ENCODE measurements at regions of chr12 and their contacts with region 1.

Region 1: DNA sequence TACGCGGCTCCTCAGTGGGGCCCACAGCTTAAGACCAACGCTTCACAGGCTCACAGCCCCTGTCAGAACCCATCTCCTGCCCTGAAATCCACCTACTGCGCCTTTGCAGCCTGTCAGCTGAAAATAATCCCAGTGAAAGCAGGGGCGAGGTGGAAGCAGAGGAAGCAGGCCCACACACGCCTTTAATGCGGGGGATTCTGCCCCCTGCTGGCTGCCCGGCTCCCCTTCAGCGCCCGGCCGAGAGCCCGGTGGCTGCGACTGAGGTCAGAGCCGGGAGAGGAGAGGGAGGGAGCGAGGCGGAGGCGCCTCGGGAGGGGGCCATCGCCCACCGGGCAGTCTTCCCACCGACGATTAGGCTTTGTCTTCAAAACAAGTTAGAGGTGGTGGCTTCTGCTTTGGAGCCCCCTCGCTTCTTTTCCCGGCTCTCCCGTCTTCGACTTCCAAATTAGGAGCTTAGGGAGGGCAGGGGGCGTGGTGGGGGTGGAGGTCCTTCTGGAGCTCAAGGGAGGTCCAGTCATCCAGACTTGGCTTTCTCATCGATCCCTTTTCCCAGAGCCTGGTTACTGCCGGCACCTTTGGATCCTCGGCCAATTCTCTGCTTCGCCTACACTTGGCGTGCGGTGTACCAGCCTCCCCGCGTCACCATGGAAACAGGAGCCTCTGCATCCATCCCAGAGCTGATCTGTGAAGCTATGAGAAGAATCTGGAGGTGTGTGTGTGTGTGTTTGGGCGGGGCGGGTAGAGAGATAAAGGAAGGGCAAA is 25.2 kb upstream of the RND1 start:
- DNase-seq: peak; percentile 62 to 72 (median 64)
- H3K4me3 ChIP-seq: no peak overlapping the region
- H3K4me3 Mint-ChIP-seq: peak overlapping the region in 2 of 8 donors; percentile 38 to 56
- H3K27ac ChIP-seq: no peak overlapping the region
- H3K27ac Mint-ChIP-seq: peak overlapping the region in 1 of 7 donors; percentile 6
- H3K4me1 ChIP-seq: peaks cover 9% of the 10 kb centered on the region
- H3K4me1 Mint-ChIP-seq: peaks cover 0 to 2% (median 0%) of the 10 kb centered on the region in 4 donors
- H3K27me3 ChIP-seq: peaks cover 11% of the 10 kb centered on the region
- H3K27me3 Mint-ChIP-seq: peaks cover 5 to 11% of the 10 kb centered on the region in 2 donors

Region 2: DNA sequence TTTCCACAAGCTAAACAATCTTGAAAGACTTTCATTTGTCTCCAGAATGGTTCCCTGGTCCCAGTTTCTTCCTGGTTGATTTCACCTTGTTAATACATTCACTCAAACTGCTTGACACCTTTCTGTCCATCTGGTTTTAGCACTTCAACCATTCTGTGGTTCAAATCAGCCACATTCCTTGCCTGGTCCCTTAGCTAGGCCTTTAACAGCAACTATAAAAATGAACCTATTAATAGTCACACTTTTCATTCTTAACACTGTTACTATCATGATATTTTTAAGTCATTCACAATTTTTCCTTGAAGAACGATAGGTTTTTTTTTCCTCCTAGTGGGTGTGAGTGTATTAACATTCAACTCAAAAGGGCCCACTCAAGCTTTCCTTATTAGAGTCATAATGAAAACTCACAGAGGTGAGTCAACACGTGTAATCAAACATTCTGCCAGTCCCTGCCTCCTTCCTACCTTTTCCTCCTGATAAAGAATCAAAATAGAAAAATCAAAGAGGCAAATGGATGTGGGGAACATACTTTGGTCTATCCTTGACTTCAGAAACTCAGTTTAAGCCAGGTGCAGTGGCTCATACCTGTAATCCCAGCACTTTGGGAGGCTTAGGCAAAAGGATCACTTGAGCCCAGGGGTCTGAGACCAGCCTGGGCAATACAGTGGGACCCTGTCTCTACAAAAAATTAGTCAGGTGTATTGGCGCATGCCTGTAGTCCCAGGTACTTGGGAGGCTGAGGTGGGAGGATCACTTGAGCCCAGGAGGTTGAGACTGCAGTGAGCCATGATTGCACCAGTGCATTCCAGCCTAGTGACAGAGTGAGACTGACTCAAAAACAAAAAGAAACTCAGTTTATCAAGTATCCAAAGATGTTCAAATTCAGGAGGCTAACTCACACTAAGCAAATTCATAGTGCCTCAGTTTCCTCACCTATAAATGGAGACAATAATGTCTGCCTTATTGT is 139.8 kb before region 1 on chr12:
- CTCF ChIA-PET with region 1: interaction called, 3 read pairs
- POLR2A ChIA-PET with region 1: no interaction called
- intact Hi-C with region 1: loop called (anchors 5 kb)
- DNase-seq: no peak
- H3K4me3 ChIP-seq: no peak overlapping the region
- H3K4me3 Mint-ChIP-seq: no peak overlapping the region
- H3K27ac ChIP-seq: no peak overlapping the region
- H3K27ac Mint-ChIP-seq: peak overlapping the region in 2 of 7 donors; percentile 43 to 64
- H3K4me1 ChIP-seq: no peaks in the 10 kb centered on the region
- H3K4me1 Mint-ChIP-seq: peaks cover 0 to 1% (median 0%) of the 10 kb centered on the region in 4 donors
- H3K27me3 ChIP-seq: no peaks in the 10 kb centered on the region
- H3K27me3 Mint-ChIP-seq: peaks cover 0 to 1% of the 10 kb centered on the region in 2 donors

Region 3: GRCh38 chr12:48814262-48815125 is 76.3 kb before region 1 on chr12:
- CTCF ChIA-PET with region 1: interaction called, 7 read pairs
- POLR2A ChIA-PET with region 1: no interaction called
- intact Hi-C with region 1: loop called (anchors 1 kb)
- DNase-seq: peak; percentile 63 to 76 (median 66)
- H3K4me3 ChIP-seq: peak overlapping the region; percentile 87 to 94
- H3K4me3 Mint-ChIP-seq: peak overlapping the region; percentile 86 to 94 (median 92)
- H3K27ac ChIP-seq: peak overlapping the region; percentile 55
- H3K27ac Mint-ChIP-seq: peak overlapping the region in 6 of 7 donors; percentile 48 to 91 (median 78)
- H3K4me1 ChIP-seq: peaks cover 37% of the 10 kb centered on the region
- H3K4me1 Mint-ChIP-seq: peaks cover 20 to 58% (median 31%) of the 10 kb centered on the region in 4 donors
- H3K27me3 ChIP-seq: no peaks in the 10 kb centered on the region
- H3K27me3 Mint-ChIP-seq: no peaks in the 10 kb centered on the region

Region 4: DNA sequence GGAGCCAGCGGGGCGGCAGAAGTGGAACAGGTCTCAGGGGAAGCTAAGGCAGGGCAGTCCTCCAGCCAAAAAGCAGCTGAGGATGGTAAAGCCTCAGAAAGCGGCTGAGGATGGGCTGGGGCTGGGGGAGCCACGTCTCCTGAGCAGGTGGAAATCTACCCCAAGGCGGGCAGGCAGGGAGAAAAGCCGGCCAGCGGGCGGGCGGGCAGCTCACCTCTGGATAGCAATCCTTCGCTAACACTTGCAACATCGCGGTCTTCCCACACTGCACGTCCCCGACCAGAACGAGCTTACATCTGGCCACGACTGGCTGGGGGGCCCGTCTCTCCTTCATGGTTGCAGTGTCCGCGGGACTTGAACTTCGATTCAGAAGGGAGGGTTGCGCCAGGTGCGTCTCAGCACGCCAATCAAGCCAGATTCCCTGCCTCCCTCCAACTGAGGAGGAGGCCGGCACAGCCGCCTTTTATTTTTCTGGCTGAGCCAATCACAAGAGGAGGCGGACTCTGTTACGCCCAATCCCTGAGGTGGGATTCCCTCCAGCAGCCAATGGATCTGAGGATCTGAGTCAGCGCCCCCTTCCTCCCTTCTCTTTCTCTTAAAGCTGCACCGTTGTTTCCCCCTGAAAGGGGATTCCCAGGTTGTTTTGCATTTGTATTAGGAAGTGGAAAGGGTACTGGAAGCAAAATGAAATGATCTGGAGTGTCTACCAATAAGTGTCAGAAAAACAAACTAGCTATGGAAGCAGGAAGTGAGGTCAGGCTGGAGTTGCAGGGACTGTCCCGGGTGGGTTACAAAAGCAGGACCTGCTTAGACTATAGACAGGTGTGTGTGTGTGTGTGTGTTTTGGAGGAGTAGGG is 25.2 kb before region 1 on chr12 and contains the start of gene RND1:
- CTCF ChIA-PET with region 1: interaction called, 247 read pairs
- POLR2A ChIA-PET with region 1: interaction called, 10 read pairs
- intact Hi-C with region 1: no loop called
- DNase-seq: peak; percentile 85 to 95 (median 87)
- H3K4me3 ChIP-seq: peak within 1 kb of the TSS; percentile 49 to 62
- H3K4me3 Mint-ChIP-seq: peak within 1 kb of the TSS; percentile 90 to 95 (median 92)
- H3K27ac ChIP-seq: peak within 1 kb of the TSS; percentile 62
- H3K27ac Mint-ChIP-seq: peak within 1 kb of the TSS; percentile 80 to 95 (median 88)
- H3K4me1 ChIP-seq: peaks cover 21% of the 10 kb centered on the region
- H3K4me1 Mint-ChIP-seq: peaks cover 17 to 30% (median 23%) of the 10 kb centered on the region in 4 donors
- H3K27me3 ChIP-seq: peaks cover 11% of the 10 kb centered on the region
- H3K27me3 Mint-ChIP-seq: peaks cover 11 to 16% of the 10 kb centered on the region in 2 donors
- total RNA-seq, gene RND1: 0.89 to 1.4 TPM

Region 5: GRCh38 chr12:48903982-48904411 is 13.2 kb after region 1 on chr12:
- CTCF ChIA-PET with region 1: interaction called, 23 read pairs
- POLR2A ChIA-PET with region 1: interaction called, 3 read pairs
- intact Hi-C with region 1: no loop called
- DNase-seq: peak; percentile 81 to 89 (median 82)
- H3K4me3 ChIP-seq: peak overlapping the region in 1 of 2 donors; percentile 36
- H3K4me3 Mint-ChIP-seq: peak overlapping the region; percentile 68 to 86 (median 82)
- H3K27ac ChIP-seq: no peak overlapping the region
- H3K27ac Mint-ChIP-seq: peak overlapping the region in 6 of 7 donors; percentile 76 to 92 (median 89)
- H3K4me1 ChIP-seq: peaks cover 6% of the 10 kb centered on the region
- H3K4me1 Mint-ChIP-seq: peaks cover 2 to 13% (median 7%) of the 10 kb centered on the region in 4 donors
- H3K27me3 ChIP-seq: no peaks in the 10 kb centered on the region
- H3K27me3 Mint-ChIP-seq: peaks cover 0 to 4% of the 10 kb centered on the region in 2 donors

Region 6: DNA sequence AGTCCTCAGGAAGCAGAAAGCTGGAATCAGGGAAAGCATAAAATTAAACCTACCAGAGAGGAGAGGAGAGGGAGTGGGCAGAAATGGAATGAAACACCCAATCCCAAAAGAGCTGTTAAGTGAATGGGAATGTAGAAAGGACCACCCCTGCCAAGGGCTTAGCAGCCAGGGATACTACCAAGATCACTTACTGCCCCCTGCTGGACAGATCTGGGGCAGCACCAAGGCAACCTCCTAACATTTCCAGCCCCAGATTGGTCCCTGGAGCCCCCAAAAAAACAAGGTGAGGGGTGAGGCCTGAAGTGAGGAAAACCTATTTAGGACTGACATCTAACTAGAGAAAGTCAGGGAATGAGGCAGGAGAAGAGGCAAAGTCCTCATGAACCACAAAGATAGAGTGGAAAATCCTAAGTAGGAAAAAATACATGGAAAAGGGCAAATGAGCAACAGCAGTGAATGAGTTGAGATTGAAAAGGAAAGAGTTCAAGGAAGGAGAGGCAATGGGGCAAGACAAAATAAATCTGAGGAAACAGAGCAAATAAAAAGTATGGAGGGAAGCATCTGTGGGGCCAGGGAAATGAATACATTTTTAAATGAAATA is 45.6 kb after region 1 on chr12:
- CTCF ChIA-PET with region 1: interaction called, 21 read pairs
- POLR2A ChIA-PET with region 1: no interaction called
- intact Hi-C with region 1: no loop called
- DNase-seq: peak; percentile 74 to 82 (median 78)
- H3K4me3 ChIP-seq: no peak overlapping the region
- H3K4me3 Mint-ChIP-seq: no peak overlapping the region
- H3K27ac ChIP-seq: peak overlapping the region; percentile 71
- H3K27ac Mint-ChIP-seq: peak overlapping the region; percentile 86 to 97 (median 95)
- H3K4me1 ChIP-seq: peaks cover 45% of the 10 kb centered on the region
- H3K4me1 Mint-ChIP-seq: peaks cover 31 to 50% (median 38%) of the 10 kb centered on the region in 4 donors
- H3K27me3 ChIP-seq: no peaks in the 10 kb centered on the region
- H3K27me3 Mint-ChIP-seq: no peaks in the 10 kb centered on the region

Region 7: DNA sequence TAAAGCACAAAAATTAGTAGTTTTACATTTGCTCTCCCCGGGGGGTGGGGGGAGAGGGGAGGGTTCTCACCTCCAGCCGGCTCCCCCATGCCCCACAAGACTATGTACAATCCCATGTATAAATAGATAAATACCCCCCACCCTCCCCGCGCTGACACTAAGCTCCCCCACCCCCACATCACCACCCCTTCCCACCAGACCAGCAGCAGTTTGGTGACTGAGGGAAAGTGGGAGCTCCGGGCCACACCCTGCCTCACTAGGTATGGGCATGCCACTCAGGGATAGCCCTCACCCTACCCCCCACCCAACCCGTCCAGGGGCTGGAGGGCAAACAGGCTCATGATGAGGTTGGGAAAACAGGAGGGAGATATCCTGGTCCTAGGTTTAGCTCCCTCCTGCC is 129.6 kb after region 1 on chr12:
- CTCF ChIA-PET with region 1: no interaction called
- POLR2A ChIA-PET with region 1: no interaction called
- intact Hi-C with region 1: no loop called
- DNase-seq: no peak
- H3K4me3 ChIP-seq: no peak overlapping the region
- H3K4me3 Mint-ChIP-seq: no peak overlapping the region
- H3K27ac ChIP-seq: no peak overlapping the region
- H3K27ac Mint-ChIP-seq: peak overlapping the region; percentile 25 to 92 (median 80)
- H3K4me1 ChIP-seq: peaks cover 24% of the 10 kb centered on the region
- H3K4me1 Mint-ChIP-seq: peaks cover 16 to 42% (median 29%) of the 10 kb centered on the region in 4 donors
- H3K27me3 ChIP-seq: no peaks in the 10 kb centered on the region
- H3K27me3 Mint-ChIP-seq: no peaks in the 10 kb centered on the region

Region 8: GRCh38 chr12:49219417-49220026 is 328.7 kb after region 1 on chr12:
- CTCF ChIA-PET with region 1: no interaction called
- POLR2A ChIA-PET with region 1: no interaction called
- intact Hi-C with region 1: no loop called
- DNase-seq: no peak
- H3K4me3 ChIP-seq: no peak overlapping the region
- H3K4me3 Mint-ChIP-seq: no peak overlapping the region
- H3K27ac ChIP-seq: no peak overlapping the region
- H3K27ac Mint-ChIP-seq: peak overlapping the region in 2 of 7 donors; percentile 7 to 66
- H3K4me1 ChIP-seq: no peaks in the 10 kb centered on the region
- H3K4me1 Mint-ChIP-seq: no peaks in the 10 kb centered on the region
- H3K27me3 ChIP-seq: no peaks in the 10 kb centered on the region
- H3K27me3 Mint-ChIP-seq: no peaks in the 10 kb centered on the region